T-cell (primary cell): ENCODE measurements at regions of chr1 and their contacts with region 1.

Region 1: DNA sequence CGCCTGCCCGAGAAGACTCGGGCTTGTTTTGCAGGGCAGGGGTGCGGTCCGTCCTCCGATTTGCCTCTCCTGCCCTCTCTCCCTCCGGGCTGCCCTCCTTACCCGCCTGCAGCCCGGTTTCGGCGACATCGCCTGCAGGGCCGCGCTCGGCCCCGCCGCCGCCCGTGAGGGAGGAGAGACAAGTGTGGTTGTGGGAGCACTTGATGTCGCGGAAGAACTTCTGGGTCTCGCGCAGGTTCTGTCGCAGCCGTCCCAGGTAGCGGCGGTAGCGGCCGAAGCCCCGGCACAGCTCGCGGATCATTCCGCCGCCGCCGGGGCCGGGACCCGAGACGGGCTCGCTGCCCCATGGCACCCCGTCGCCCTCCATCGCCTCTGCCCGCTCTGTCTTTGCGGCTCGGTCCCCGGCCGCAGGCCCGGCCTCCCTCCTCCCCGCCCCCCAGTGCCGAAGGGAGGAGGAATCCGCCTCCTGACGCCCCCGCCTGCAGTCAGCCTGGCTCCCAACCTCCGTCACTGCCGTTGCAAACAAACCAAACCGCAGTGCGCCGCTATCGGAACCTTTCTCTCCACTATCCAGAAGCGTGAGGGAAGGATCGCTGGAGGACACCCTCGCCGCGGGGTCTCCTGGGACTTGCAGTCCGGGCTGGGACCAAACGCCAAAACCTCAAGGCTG is at the start of gene DSTYK:
- DNase-seq: peak; percentile 81 to 94 (median 88)
- ATAC-seq: peak; percentile 89 to 93 (median 92)
- H3K4me3 ChIP-seq: peak within 1 kb of the TSS; percentile 87 to 97
- H3K4me3 Mint-ChIP-seq: peak within 1 kb of the TSS; percentile 95 to 97 (median 96)
- H3K27ac ChIP-seq: peak within 1 kb of the TSS; percentile 74
- H3K27ac Mint-ChIP-seq: peak within 1 kb of the TSS; percentile 98
- H3K4me1 ChIP-seq: peaks cover 7 to 25% of the 10 kb centered on the region in 2 experiments
- H3K4me1 Mint-ChIP-seq: peaks cover 36 to 52% (median 47%) of the 10 kb centered on the region in 3 donors
- H3K27me3 ChIP-seq: no peaks in the 10 kb centered on the region
- H3K27me3 Mint-ChIP-seq: no peaks in the 10 kb centered on the region
- total RNA-seq, gene DSTYK: 13.8 to 15.7 (median 14.7) TPM

Region 2: GRCh38 chr1:205121660-205122488 is 89.4 kb before region 1 on chr1 and contains the start of gene RBBP5:
- CTCF ChIA-PET with region 1: interaction called in 1 of 2 experiments, 3 read pairs
- POLR2A ChIA-PET with region 1: interaction called in 1 of 2 experiments, 10 read pairs
- DNase-seq: peak; percentile 88 to 98 (median 94)
- ATAC-seq: peak; percentile 93 to 98 (median 98)
- H3K4me3 ChIP-seq: peak within 1 kb of the TSS; percentile 88 to 92
- H3K4me3 Mint-ChIP-seq: peak within 1 kb of the TSS; percentile 97 to 99 (median 98)
- H3K27ac ChIP-seq: peak within 1 kb of the TSS; percentile 99
- H3K27ac Mint-ChIP-seq: peak within 1 kb of the TSS; percentile 99 to 100
- H3K4me1 ChIP-seq: peaks cover 16 to 17% of the 10 kb centered on the region in 2 experiments
- H3K4me1 Mint-ChIP-seq: peaks cover 50 to 55% (median 52%) of the 10 kb centered on the region in 3 donors
- H3K27me3 ChIP-seq: no peaks in the 10 kb centered on the region
- H3K27me3 Mint-ChIP-seq: no peaks in the 10 kb centered on the region
- total RNA-seq, gene RBBP5: 13.9 to 24.3 (median 22.3) TPM

Region 3: GRCh38 chr1:205190845-205191577 is 20.3 kb before region 1 on chr1:
- CTCF ChIA-PET with region 1: no interaction called
- POLR2A ChIA-PET with region 1: interaction called, 3 to 11 read pairs
- DNase-seq: no peak
- ATAC-seq: no peak
- H3K4me3 ChIP-seq: no peak overlapping the region
- H3K4me3 Mint-ChIP-seq: no peak overlapping the region
- H3K27ac ChIP-seq: no peak overlapping the region
- H3K27ac Mint-ChIP-seq: no peak overlapping the region
- H3K4me1 ChIP-seq: peaks cover 2 to 3% of the 10 kb centered on the region in 2 experiments
- H3K4me1 Mint-ChIP-seq: peaks cover 66 to 74% (median 74%) of the 10 kb centered on the region in 3 donors
- H3K27me3 ChIP-seq: no peaks in the 10 kb centered on the region
- H3K27me3 Mint-ChIP-seq: no peaks in the 10 kb centered on the region